CD8-positive, alpha-beta T cell (primary cell): ENCODE measurements at regions of chr1 and their contacts with region 1.

Region 1: GRCh38 chr1:156054500-156055280 is at the start of gene LAMTOR2:
- DNase-seq: peak; percentile 90 to 98 (median 94)
- ATAC-seq: peak; percentile 78
- H3K4me3 ChIP-seq: peak within 1 kb of the TSS; percentile 85 to 96
- H3K4me3 Mint-ChIP-seq: peak within 1 kb of the TSS; percentile 92
- H3K27ac ChIP-seq: peak within 1 kb of the TSS; percentile 54 to 79
- H3K27ac Mint-ChIP-seq: peak within 1 kb of the TSS; percentile 84
- H3K4me1 ChIP-seq: peaks cover 11% of the 10 kb centered on the region
- H3K4me1 Mint-ChIP-seq: peaks cover 31% of the 10 kb centered on the region
- H3K27me3 ChIP-seq: no peaks in the 10 kb centered on the region
- H3K27me3 Mint-ChIP-seq: no peaks in the 10 kb centered on the region
- CTCF ChIP-seq: no peak
- total RNA-seq, gene LAMTOR2: 6.7 to 8.3 TPM

Region 2: DNA sequence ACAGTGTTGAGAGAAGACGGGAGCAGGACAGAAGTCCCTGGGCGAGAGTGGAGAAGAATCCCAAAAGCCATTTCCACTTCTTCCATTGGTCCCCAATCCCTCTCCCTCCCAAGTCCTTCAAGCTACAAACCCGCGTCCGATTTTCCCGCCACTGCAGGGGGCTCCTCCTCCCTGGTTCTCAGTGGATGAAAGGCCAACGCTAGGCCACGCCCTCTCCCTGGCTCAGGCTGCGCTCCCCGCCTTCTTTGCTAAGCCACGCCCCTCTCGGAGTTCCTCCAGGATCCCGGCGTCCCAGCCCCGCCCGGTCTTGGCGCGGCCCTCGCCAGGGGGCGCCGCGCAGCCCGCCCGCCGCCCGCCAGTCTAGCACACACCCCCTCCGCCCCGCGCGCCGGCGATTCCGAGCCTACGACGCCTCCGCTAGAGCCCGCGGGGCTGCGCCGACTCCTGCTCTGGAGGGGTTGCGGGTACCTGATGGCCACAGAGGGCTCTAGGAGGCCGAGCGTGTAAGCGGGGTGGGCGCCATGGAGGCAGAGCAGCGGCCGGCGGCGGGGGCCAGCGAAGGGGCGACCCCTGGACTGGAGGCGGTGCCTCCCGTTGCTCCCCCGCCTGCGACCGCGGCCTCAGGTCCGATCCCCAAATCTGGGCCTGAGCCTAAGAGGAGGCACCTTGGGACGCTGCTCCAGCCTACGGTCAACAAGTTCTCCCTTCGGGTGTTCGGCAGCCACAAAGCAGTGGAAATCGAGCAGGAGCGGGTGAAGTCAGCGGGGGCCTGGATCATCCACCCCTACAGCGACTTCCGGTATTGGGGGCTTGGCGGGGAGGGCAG is 777.4 kb before region 1 on chr1 and contains the start of gene HCN3:
- CTCF ChIA-PET with region 1: no interaction called
- POLR2A ChIA-PET with region 1: no interaction called
- intact Hi-C with region 1: loop called in 1 of 2 experiments (anchors 10 kb)
- DNase-seq: peak; percentile 65 to 96 (median 92)
- ATAC-seq: peak; percentile 47
- H3K4me3 ChIP-seq: peak within 1 kb of the TSS; percentile 57 to 70
- H3K4me3 Mint-ChIP-seq: peak within 1 kb of the TSS; percentile 79
- H3K27ac ChIP-seq: peak within 1 kb of the TSS; percentile 20 to 31
- H3K27ac Mint-ChIP-seq: peak within 1 kb of the TSS; percentile 32
- H3K4me1 ChIP-seq: peaks cover 29% of the 10 kb centered on the region
- H3K4me1 Mint-ChIP-seq: peaks cover 35% of the 10 kb centered on the region
- H3K27me3 ChIP-seq: no peaks in the 10 kb centered on the region
- H3K27me3 Mint-ChIP-seq: no peaks in the 10 kb centered on the region
- CTCF ChIP-seq: peak; percentile 64
- total RNA-seq, gene HCN3: 1.3 TPM

Region 3: GRCh38 chr1:155911156-155912055 is 143.3 kb before region 1 on chr1 and contains the start of gene RIT1:
- CTCF ChIA-PET with region 1: interaction called, 3 read pairs
- POLR2A ChIA-PET with region 1: no interaction called
- intact Hi-C with region 1: loop called (anchors 1 kb)
- DNase-seq: peak; percentile 62 to 93 (median 85)
- ATAC-seq: peak; percentile 97
- H3K4me3 ChIP-seq: peak within 1 kb of the TSS; percentile 68 to 72
- H3K4me3 Mint-ChIP-seq: peak within 1 kb of the TSS; percentile 97
- H3K27ac ChIP-seq: peak within 1 kb of the TSS; percentile 71 to 73
- H3K27ac Mint-ChIP-seq: peak within 1 kb of the TSS; percentile 98
- H3K4me1 ChIP-seq: peaks cover 21% of the 10 kb centered on the region
- H3K4me1 Mint-ChIP-seq: peaks cover 27% of the 10 kb centered on the region
- H3K27me3 ChIP-seq: no peaks in the 10 kb centered on the region
- H3K27me3 Mint-ChIP-seq: no peaks in the 10 kb centered on the region
- CTCF ChIP-seq: no peak
- total RNA-seq, gene RIT1: 79.6 to 85.0 TPM

Region 4: GRCh38 chr1:155978325-155978972 is 76.2 kb before region 1 on chr1 and contains the start of gene ARHGEF2:
- CTCF ChIA-PET with region 1: interaction called, 5 read pairs
- POLR2A ChIA-PET with region 1: no interaction called
- intact Hi-C with region 1: loop called in 1 of 2 experiments (anchors 5 kb)
- DNase-seq: peak; percentile 46 to 88 (median 79)
- ATAC-seq: peak; percentile 66
- H3K4me3 ChIP-seq: peak within 1 kb of the TSS; percentile 70 to 100
- H3K4me3 Mint-ChIP-seq: peak within 1 kb of the TSS; percentile 97
- H3K27ac ChIP-seq: peak within 1 kb of the TSS; percentile 59 to 91
- H3K27ac Mint-ChIP-seq: peak within 1 kb of the TSS; percentile 94
- H3K4me1 ChIP-seq: peaks cover 72% of the 10 kb centered on the region
- H3K4me1 Mint-ChIP-seq: peaks cover 69% of the 10 kb centered on the region
- H3K27me3 ChIP-seq: no peaks in the 10 kb centered on the region
- H3K27me3 Mint-ChIP-seq: no peaks in the 10 kb centered on the region
- CTCF ChIP-seq: no peak
- total RNA-seq, gene ARHGEF2: 51.6 to 52.3 TPM

Region 5: DNA sequence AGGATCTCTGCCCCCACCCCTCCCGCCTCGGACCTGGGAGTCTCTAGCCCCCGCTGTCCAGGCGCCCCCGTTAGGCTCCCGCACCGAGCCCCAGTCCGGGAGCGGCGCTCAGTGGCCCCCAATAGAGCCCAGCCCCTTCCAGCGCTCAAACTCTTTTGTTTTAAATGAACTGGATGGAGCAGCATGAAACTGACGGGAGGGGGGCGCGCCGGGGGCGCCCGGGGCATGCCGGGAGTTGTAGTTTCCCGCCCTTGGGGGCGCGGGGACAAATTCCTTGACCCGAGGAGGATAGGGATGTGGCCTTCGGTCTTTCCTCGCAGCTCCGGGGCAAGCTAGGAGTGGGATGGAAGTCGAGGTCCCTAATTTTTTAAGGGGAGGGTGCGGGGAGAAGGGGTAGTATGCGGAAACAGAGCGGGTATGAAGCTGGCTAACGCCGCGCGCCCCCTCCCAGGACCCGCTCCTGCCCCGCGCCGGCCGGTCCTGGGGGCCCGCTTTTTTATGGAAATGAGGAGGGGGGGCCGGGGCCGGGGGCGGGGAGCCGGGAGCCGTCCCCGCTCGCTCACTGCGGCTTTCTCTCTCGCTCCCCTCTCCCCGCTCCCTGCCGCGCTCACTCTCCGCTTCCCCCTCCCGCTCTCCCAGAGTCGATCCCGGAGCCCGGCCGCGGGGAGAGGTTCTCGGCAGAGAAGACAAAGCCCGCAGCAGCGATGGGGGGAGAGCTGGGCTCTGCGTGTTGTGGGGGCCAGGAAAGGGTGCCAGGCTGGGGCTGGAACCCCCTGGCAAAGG is 27.8 kb after region 1 on chr1 and contains the start of gene MEX3A:
- CTCF ChIA-PET with region 1: no interaction called
- POLR2A ChIA-PET with region 1: no interaction called
- intact Hi-C with region 1: loop called in 1 of 2 experiments (anchors 1 kb)
- DNase-seq: peak in 8 of 9 experiments; percentile 39 to 73 (median 64)
- ATAC-seq: peak; percentile 90
- H3K4me3 ChIP-seq: peak within 1 kb of the TSS; percentile 65 to 88
- H3K4me3 Mint-ChIP-seq: peak within 1 kb of the TSS; percentile 87
- H3K27ac ChIP-seq: no peak within 1 kb of the TSS
- H3K27ac Mint-ChIP-seq: no peak within 1 kb of the TSS
- H3K4me1 ChIP-seq: peaks cover 13% of the 10 kb centered on the region
- H3K4me1 Mint-ChIP-seq: peaks cover 7% of the 10 kb centered on the region
- H3K27me3 ChIP-seq: peaks cover 3 to 25% of the 10 kb centered on the region in 2 experiments
- H3K27me3 Mint-ChIP-seq: peaks cover 29% of the 10 kb centered on the region
- CTCF ChIP-seq: no peak
- total RNA-seq, gene MEX3A: 0.14 to 0.22 TPM

Region 6: DNA sequence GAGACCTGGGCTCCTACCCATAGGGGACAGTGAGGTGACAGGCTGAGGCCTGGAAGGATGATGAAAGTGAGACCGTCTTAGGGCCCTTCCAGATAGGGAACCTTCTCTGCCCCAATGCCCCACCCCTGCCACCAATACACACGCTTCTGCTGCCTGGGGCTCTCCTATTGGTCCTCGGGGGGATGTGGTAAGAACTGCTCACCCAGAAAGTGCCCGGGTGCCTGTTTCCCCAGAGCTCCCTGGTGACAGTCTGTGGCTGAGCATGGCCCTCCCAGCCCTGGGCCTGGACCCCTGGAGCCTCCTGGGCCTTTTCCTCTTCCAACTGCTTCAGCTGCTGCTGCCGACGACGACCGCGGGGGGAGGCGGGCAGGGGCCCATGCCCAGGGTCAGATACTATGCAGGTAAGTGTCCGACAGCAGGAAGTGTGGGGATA is 99.6 kb after region 1 on chr1:
- CTCF ChIA-PET with region 1: no interaction called
- POLR2A ChIA-PET with region 1: no interaction called
- intact Hi-C with region 1: no loop called
- DNase-seq: peak in 4 of 9 experiments; percentile 24 to 78 (median 54)
- ATAC-seq: peak; percentile 83
- H3K4me3 ChIP-seq: peak overlapping the region in 1 of 2 experiments; percentile 36
- H3K4me3 Mint-ChIP-seq: peak overlapping the region; percentile 67
- H3K27ac ChIP-seq: peak overlapping the region in 1 of 2 experiments; percentile 24
- H3K27ac Mint-ChIP-seq: peak overlapping the region; percentile 24
- H3K4me1 ChIP-seq: no peaks in the 10 kb centered on the region
- H3K4me1 Mint-ChIP-seq: peaks cover 30% of the 10 kb centered on the region
- H3K27me3 ChIP-seq: no peaks in the 10 kb centered on the region
- H3K27me3 Mint-ChIP-seq: no peaks in the 10 kb centered on the region
- CTCF ChIP-seq: no peak

Region 7: GRCh38 chr1:156212833-156213643 is 158.3 kb after region 1 on chr1 and contains the start of gene PMF1:
- CTCF ChIA-PET with region 1: no interaction called
- POLR2A ChIA-PET with region 1: no interaction called
- intact Hi-C with region 1: loop called in 1 of 2 experiments (anchors 1 kb)
- DNase-seq: peak; percentile 89 to 97 (median 95)
- ATAC-seq: peak; percentile 95
- H3K4me3 ChIP-seq: peak within 1 kb of the TSS; percentile 70 to 79
- H3K4me3 Mint-ChIP-seq: peak within 1 kb of the TSS; percentile 97
- H3K27ac ChIP-seq: peak within 1 kb of the TSS; percentile 92 to 95
- H3K27ac Mint-ChIP-seq: peak within 1 kb of the TSS; percentile 99
- H3K4me1 ChIP-seq: peaks cover 24% of the 10 kb centered on the region
- H3K4me1 Mint-ChIP-seq: peaks cover 31% of the 10 kb centered on the region
- H3K27me3 ChIP-seq: no peaks in the 10 kb centered on the region
- H3K27me3 Mint-ChIP-seq: no peaks in the 10 kb centered on the region
- CTCF ChIP-seq: no peak
- total RNA-seq, gene PMF1: 72.1 to 74.4 TPM

Region 8: DNA sequence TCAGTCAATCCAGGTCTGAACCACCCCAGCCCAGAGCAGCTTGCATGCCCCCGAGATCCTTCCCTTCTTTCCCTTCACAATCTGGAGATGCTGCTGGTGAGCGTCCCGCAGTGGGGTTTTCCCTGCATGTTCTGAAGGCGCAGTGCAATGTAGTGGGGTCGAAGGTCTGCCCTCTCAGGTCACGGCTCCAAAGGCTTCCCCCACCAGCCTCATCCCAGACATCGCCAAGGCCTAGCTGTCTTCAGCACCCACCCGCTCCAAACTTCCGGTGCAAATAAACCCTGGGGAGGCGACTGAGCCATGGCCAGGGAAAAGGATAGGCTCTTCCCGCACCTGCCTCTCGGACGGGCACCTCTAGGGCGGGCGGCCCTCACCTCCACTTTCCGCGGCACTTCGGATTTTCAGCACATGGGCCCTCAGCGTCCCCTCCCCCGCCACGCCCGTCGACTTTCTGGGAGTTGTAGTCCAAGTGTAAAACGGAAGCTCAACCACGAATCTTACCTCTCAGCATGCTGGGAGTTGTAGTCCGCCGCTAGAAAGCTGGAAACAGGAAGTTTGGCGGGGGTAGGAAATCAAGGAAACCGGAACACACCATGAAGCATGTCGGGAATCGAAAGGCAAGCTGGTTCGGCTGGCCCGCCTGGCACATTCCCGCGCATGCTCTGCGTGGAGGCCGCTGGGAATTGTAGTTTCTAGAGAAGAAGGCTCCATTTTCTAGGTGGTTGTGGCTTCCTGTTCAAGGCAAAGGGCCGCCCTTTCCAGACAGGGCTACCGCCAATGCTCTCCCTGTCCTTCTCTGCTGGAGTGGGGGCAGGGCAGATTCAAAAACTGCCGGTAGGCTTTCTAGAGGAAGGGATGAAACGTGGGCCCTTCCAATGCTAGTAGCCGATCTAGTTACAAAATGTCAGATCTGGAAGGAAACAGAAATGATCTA is 686.3 kb after region 1 on chr1 and contains the start of gene MRPL24:
- CTCF ChIA-PET with region 1: no interaction called
- POLR2A ChIA-PET with region 1: no interaction called
- intact Hi-C with region 1: loop called in 1 of 2 experiments (anchors 10 kb)
- DNase-seq: peak; percentile 88 to 100 (median 96)
- ATAC-seq: peak; percentile 88
- H3K4me3 ChIP-seq: peak within 1 kb of the TSS; percentile 60 to 68
- H3K4me3 Mint-ChIP-seq: peak within 1 kb of the TSS; percentile 97
- H3K27ac ChIP-seq: peak within 1 kb of the TSS; percentile 55 to 81
- H3K27ac Mint-ChIP-seq: peak within 1 kb of the TSS; percentile 98
- H3K4me1 ChIP-seq: peaks cover 13% of the 10 kb centered on the region
- H3K4me1 Mint-ChIP-seq: peaks cover 38% of the 10 kb centered on the region
- H3K27me3 ChIP-seq: no peaks in the 10 kb centered on the region
- H3K27me3 Mint-ChIP-seq: no peaks in the 10 kb centered on the region
- CTCF ChIP-seq: no peak
- total RNA-seq, gene MRPL24: 9.1 to 12.5 TPM